ENCODE measurements at regions of chr14 and their contacts with region 1.

Region 1: GRCh38 chr14:95561001-95561412 is 26.2 kb downstream of the GLRX5 start:
- DNase-seq: peak; percentile 84
- ATAC-seq: peak; percentile 100
- H3K4me3 ChIP-seq: no peak overlapping the region
- H3K27ac ChIP-seq: no peak overlapping the region
- H3K4me1 ChIP-seq: no peaks in the 10 kb centered on the region
- H3K27me3 ChIP-seq: no peaks in the 10 kb centered on the region
- CTCF ChIP-seq: peak; percentile 97 to 99 (median 99)
- POLR2A ChIP-seq: no peak
- RAD21 ChIP-seq: peak; percentile 99

Region 2: GRCh38 chr14:95097385-95097784 is 463.6 kb before region 1 on chr14:
- CTCF ChIA-PET with region 1: no interaction called
- POLR2A ChIA-PET with region 1: no interaction called
- RAD21 ChIA-PET with region 1: no interaction called
- intact Hi-C with region 1: no loop called
- DNase-seq: no peak
- ATAC-seq: no peak
- H3K4me3 ChIP-seq: no peak overlapping the region
- H3K27ac ChIP-seq: no peak overlapping the region
- H3K4me1 ChIP-seq: no peaks in the 10 kb centered on the region
- H3K27me3 ChIP-seq: no peaks in the 10 kb centered on the region
- CTCF ChIP-seq: no peak
- POLR2A ChIP-seq: no peak
- RAD21 ChIP-seq: no peak

Region 3: GRCh38 chr14:95314616-95315482 is 246.2 kb before region 1 on chr14:
- CTCF ChIA-PET with region 1: no interaction called
- POLR2A ChIA-PET with region 1: no interaction called
- RAD21 ChIA-PET with region 1: no interaction called
- intact Hi-C with region 1: no loop called
- DNase-seq: no peak
- ATAC-seq: peak; percentile 39; the same call in 1 of the 2 replicates
- H3K4me3 ChIP-seq: 0 out of 4 replicates have a peak overlapping the region, but pooled peaks of 1 of the 2 experiments have one; percentile 8
- H3K27ac ChIP-seq: no peak overlapping the region
- H3K4me1 ChIP-seq: peaks cover 19 to 63% of the 10 kb centered on the region in 2 experiments
- H3K27me3 ChIP-seq: no peaks in the 10 kb centered on the region
- CTCF ChIP-seq: no peak
- POLR2A ChIP-seq: no peak
- RAD21 ChIP-seq: no peak

Region 4: GRCh38 chr14:95683793-95684192 is 122.8 kb after region 1 on chr14:
- CTCF ChIA-PET with region 1: interaction called, 4 read pairs
- POLR2A ChIA-PET with region 1: no interaction called
- RAD21 ChIA-PET with region 1: no interaction called
- intact Hi-C with region 1: loop called (anchors 1 kb)
- DNase-seq: peak; percentile 32
- ATAC-seq: peak; percentile 89
- H3K4me3 ChIP-seq: no peak overlapping the region
- H3K27ac ChIP-seq: no peak overlapping the region
- H3K4me1 ChIP-seq: no peaks in the 10 kb centered on the region
- H3K27me3 ChIP-seq: peaks cover 5% of the 10 kb centered on the region
- CTCF ChIP-seq: peak; percentile 81 to 95 (median 86); a peak in 5 of 6 replicates
- POLR2A ChIP-seq: no peak
- RAD21 ChIP-seq: peak; percentile 65

Region 5: DNA sequence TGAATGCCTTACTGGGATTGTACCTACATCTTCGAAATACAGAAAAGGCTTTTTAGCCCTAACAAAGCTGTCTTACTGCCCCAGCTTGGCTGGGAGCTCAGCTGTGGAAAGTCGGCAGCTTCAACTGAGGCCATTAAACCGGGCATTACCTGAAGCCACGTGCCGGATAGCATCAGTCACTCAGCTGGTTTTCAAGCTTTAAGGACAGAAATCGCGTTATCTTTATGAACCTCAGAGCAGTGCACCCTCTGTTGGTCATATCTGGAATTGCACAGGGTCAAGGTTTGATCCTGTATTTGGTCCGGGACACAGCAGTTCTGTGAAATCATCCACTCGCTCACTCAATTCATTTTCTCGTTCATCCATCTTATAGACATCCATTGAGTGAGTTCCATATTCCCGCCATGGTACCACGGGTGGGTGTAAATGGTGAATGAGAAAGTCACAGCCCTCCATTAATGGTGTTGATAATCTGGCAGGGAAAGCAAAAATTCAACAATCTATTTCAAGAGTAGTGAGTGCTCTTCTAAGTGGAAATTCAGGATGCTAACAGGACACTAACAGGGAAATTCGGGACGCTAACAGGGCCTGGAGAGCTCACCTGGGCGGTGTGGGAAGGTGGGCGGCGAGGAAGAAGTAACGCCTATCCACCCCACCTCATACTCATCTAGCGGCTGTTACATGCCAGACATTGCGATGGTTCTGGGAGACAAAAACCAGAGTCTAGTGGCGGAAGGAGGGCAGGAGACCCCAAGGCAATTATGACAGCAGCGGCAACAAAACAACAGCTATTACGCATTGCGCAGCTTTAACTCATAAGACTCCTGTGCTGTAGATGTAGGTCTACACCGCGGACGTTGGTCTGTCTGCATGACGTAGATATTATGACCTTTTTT is 213.5 kb after region 1 on chr14:
- CTCF ChIA-PET with region 1: interaction called, 10 read pairs
- POLR2A ChIA-PET with region 1: no interaction called
- RAD21 ChIA-PET with region 1: no interaction called
- intact Hi-C with region 1: loop called (anchors 1 kb)
- DNase-seq: peak; percentile 56
- ATAC-seq: peak; percentile 70
- H3K4me3 ChIP-seq: no peak overlapping the region
- H3K27ac ChIP-seq: no peak overlapping the region
- H3K4me1 ChIP-seq: no peaks in the 10 kb centered on the region
- H3K27me3 ChIP-seq: peaks cover 7% of the 10 kb centered on the region; the same call in 1 of the 2 replicates
- CTCF ChIP-seq: peak; percentile 66 to 93 (median 91); a peak in 5 of 6 replicates
- POLR2A ChIP-seq: no peak
- RAD21 ChIP-seq: peak; percentile 63

Region 6: GRCh38 chr14:95871300-95871900 is 310.4 kb after region 1 on chr14:
- CTCF ChIA-PET with region 1: no interaction called
- POLR2A ChIA-PET with region 1: no interaction called
- RAD21 ChIA-PET with region 1: no interaction called
- intact Hi-C with region 1: no loop called
- DNase-seq: no peak
- ATAC-seq: no peak
- H3K4me3 ChIP-seq: no peak overlapping the region
- H3K27ac ChIP-seq: no peak overlapping the region
- H3K4me1 ChIP-seq: no peaks in the 10 kb centered on the region
- H3K27me3 ChIP-seq: peaks cover 51% of the 10 kb centered on the region
- CTCF ChIP-seq: no peak
- POLR2A ChIP-seq: no peak
- RAD21 ChIP-seq: no peak

Region 7: GRCh38 chr14:95895720-95896119 is 334.7 kb after region 1 on chr14:
- CTCF ChIA-PET with region 1: interaction called, 3 read pairs
- POLR2A ChIA-PET with region 1: no interaction called
- RAD21 ChIA-PET with region 1: no interaction called
- intact Hi-C with region 1: loop called (anchors 5 kb)
- DNase-seq: peak; percentile 26
- ATAC-seq: peak; percentile 93
- H3K4me3 ChIP-seq: no peak overlapping the region
- H3K27ac ChIP-seq: no peak overlapping the region
- H3K4me1 ChIP-seq: 0 out of 4 replicates have a peak, but pooled peaks cover 0 to 7% of the 10 kb centered on the region in 2 experiments
- H3K27me3 ChIP-seq: peaks cover 82% of the 10 kb centered on the region
- CTCF ChIP-seq: peak; percentile 20 to 70 (median 62); a peak in 5 of 6 replicates
- POLR2A ChIP-seq: no peak
- RAD21 ChIP-seq: peak; percentile 42

Region 8: DNA sequence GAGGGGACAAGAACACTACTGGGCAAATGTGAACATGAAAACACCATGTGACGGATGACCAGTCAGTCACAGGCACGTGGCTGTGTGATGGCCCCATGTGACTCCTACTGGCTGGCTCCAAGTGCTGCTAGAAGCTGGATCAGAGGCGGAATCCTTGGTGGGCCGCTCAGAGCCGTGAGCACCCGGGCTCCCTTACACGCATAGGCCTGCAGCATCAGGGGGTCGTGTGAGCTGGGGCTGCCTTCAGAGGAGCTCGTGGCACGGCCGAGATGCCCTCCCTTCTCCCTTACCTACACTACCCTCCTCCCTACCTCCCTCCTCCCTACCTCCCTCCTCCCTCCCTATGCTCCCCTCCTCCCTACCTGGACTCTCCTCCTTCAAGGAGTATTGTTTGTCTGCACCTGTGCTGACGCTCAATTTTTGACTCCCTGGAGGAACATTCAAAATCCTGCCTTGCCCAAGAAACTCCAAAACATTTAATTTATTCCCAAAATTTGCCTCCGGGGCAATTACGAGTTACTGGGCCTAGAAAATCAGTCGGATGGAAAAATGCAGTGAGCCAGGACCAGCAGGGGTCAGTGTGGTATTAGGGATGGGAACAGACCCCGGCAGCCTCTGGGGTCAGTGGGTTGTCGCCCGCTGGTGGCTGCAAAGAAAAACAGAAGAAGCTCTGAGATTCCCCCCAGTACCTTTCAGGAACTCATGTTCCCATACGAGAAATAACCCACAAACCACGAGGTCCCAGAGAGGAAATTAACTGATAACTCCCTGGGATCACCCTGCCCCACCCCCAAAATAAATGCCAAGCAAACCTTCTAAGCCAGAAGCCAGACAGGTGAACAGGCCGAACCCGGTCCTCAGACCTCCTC is 539.4 kb after region 1 on chr14:
- CTCF ChIA-PET with region 1: interaction called, 6 read pairs
- POLR2A ChIA-PET with region 1: no interaction called
- RAD21 ChIA-PET with region 1: no interaction called
- intact Hi-C with region 1: loop called (anchors 1 kb)
- DNase-seq: peak; percentile 73
- ATAC-seq: peak; percentile 79
- H3K4me3 ChIP-seq: no peak overlapping the region
- H3K27ac ChIP-seq: no peak overlapping the region
- H3K4me1 ChIP-seq: peaks cover 4 to 9% of the 10 kb centered on the region in 2 experiments; a peak in 1 of 4 replicates
- H3K27me3 ChIP-seq: no peaks in the 10 kb centered on the region
- CTCF ChIP-seq: peak; percentile 91 to 99 (median 98)
- POLR2A ChIP-seq: no peak
- RAD21 ChIP-seq: peak; percentile 99

Region 9: DNA sequence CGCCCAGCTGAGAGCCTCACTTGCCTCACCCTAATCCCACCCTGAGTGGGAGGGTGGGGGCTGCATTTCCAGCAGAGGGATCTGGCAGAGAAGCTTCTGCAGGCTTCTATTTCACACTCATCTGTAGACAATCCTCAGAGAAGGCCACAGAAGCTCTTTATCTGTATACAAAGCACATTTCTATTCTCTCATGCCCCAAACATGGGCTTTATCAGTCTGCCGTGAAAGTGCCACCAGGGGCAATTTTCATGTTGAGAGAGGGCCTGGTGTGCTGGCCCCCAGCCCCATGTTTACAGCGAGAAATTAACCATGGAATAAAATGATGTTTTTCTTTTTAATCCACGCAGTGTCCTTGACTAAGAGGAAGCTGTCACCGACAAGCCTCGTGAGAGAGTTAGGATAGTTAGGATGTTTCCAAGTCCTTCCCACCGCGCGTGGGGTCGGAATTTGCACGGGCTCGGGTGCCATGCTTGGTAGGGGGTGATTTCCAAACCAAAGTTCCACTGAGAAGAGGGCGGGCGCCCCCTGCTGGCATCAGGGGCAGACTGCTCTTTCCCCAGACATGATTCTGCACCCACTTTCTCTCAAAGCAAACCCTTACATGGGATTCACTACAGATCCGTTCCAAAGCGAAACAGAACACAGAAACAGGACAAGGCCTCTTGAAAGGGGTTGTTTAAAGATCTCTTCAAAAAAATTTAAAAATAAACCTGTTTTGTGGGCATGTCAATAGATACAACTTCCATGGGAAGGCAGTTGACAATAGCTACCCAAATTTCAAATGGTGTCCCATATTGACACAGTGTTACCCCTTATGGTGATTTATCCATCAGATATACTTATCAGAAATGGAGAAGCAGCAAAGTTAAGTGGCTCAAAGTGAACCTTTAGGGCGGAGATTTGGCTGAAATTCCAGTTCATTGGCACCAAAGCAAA is 714.4 kb after region 1 on chr14:
- CTCF ChIA-PET with region 1: no interaction called
- POLR2A ChIA-PET with region 1: no interaction called
- RAD21 ChIA-PET with region 1: no interaction called
- intact Hi-C with region 1: loop called (anchors 5 kb)
- DNase-seq: peak; percentile 29
- ATAC-seq: peak; percentile 88
- H3K4me3 ChIP-seq: no peak overlapping the region
- H3K27ac ChIP-seq: no peak overlapping the region
- H3K4me1 ChIP-seq: no peaks in the 10 kb centered on the region
- H3K27me3 ChIP-seq: no peaks in the 10 kb centered on the region
- CTCF ChIP-seq: peak; percentile 92 to 95 (median 95)
- POLR2A ChIP-seq: no peak
- RAD21 ChIP-seq: peak; percentile 91

Measured in HCT116 (cell line).